ENCODE measurements at regions of chr12 and their contacts with region 1.

Region 1: DNA sequence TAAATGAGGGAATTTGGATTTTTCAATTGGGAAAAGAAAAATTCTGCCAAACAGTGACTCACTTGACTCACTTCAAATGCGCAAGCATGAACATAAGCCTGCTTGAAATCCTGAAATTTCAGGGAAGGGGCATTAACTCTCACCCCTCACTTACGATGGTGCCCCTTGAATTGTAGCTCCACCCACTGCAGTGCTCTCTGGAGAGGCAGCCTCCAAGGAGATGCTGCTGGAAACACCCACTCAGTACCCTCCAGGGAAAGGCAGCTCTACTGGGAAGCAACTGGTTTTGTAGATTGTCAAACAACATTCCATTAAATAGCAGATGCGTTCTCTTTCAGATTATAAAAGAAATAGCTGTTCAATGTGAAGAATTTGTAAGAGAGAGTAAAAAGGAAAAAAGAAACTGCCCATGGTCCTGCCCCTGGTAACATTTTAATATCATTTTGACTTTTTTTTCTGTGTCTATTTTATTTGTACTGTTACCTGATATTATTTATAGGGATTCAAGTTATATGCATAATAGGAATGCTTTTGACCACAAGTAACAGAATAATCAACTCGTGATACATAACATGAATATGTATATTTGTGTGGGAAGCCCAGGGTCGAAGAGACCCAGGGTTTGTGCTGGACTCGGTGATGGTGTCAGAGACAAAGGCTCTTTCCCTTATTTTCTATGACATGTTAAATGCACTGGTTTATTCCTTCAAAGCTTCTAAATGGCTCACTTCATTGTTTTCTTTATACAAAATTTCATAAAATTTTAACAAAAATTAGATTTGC is 31.1 kb upstream of the TMEM132C start:
- DNase-seq: no peak
- H3K4me3 ChIP-seq: no peak overlapping the region
- H3K27ac ChIP-seq: no peak overlapping the region
- H3K4me1 ChIP-seq: no peaks in the 10 kb centered on the region
- H3K27me3 ChIP-seq: no peaks in the 10 kb centered on the region
- CTCF ChIP-seq: no peak

Region 2: DNA sequence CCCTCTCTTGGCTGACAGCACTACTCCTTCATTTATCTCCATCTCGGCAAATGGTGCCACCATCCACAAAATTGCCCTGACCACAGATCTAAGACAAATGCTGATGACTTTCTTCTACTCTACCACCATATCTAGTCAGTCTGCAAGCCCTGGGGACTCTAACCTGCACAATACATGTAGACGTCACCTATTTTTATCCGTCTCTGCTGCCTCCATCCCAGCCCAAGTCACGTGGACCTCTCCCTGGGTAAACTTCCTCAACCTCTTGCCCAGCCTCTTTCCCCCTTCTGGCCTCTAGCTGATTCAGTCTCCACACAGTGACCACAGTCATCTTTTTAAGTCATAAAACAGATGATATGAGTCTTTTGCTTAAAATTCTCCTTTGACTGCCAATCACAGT is 1967.6 kb before region 1 on chr12:
- intact Hi-C with region 1: loop called (anchors 5 kb)
- DNase-seq: no peak
- H3K4me3 ChIP-seq: no peak overlapping the region
- H3K27ac ChIP-seq: no peak overlapping the region
- H3K4me1 ChIP-seq: no peaks in the 10 kb centered on the region
- H3K27me3 ChIP-seq: no peaks in the 10 kb centered on the region
- CTCF ChIP-seq: no peak

Measured in tibial artery (tissue), 4 donors.